ENCODE measurements at regions of chr3 and their contacts with region 1.

Region 1: GRCh38 chr3:188788621-188789081 is 383.1 kb upstream of the TPRG1 start:
- DNase-seq: peak; percentile 85
- H3K4me3 Mint-ChIP-seq: no peak overlapping the region
- H3K27ac Mint-ChIP-seq: no peak overlapping the region
- H3K4me1 Mint-ChIP-seq: peaks cover 2% of the 10 kb centered on the region
- H3K27me3 Mint-ChIP-seq: no peaks in the 10 kb centered on the region

Region 2: GRCh38 chr3:187974871-187975271 is 813.8 kb before region 1 on chr3:
- intact Hi-C with region 1: loop called (anchors 5 kb)
- DNase-seq: peak; percentile 73
- H3K4me3 Mint-ChIP-seq: peak overlapping the region; percentile 73
- H3K27ac Mint-ChIP-seq: peak overlapping the region; percentile 94
- H3K4me1 Mint-ChIP-seq: peaks cover 63% of the 10 kb centered on the region
- H3K27me3 Mint-ChIP-seq: no peaks in the 10 kb centered on the region

Region 3: DNA sequence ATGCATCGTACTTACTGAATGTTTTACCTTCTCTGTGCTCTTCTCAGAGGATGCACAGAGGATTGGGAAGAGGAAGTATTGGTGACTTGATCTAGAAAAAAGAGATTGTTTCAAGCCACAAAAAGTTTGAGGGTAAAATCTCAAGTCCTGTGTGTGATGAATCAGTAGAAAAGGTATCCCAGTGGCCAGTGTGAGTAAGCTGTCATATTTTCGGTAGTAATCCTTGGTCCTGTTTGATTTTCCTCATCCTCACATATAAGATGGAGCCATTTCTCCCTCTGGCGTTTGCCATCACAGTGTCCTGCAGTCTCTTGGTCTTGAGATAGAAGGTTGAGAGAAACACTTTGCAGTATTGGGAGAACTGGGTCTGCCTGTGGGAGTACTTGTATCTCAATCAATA is 467.9 kb before region 1 on chr3:
- intact Hi-C with region 1: loop called (anchors 5 kb)
- DNase-seq: no peak
- H3K4me3 Mint-ChIP-seq: no peak overlapping the region
- H3K27ac Mint-ChIP-seq: peak overlapping the region; percentile 29
- H3K4me1 Mint-ChIP-seq: peaks cover 48% of the 10 kb centered on the region
- H3K27me3 Mint-ChIP-seq: peaks cover 4% of the 10 kb centered on the region

Region 4: GRCh38 chr3:188683032-188683521 is 105.6 kb before region 1 on chr3:
- intact Hi-C with region 1: loop called (anchors 1 kb)
- DNase-seq: no peak
- H3K4me3 Mint-ChIP-seq: no peak overlapping the region
- H3K27ac Mint-ChIP-seq: peak overlapping the region; percentile 47
- H3K4me1 Mint-ChIP-seq: peaks cover 28% of the 10 kb centered on the region
- H3K27me3 Mint-ChIP-seq: no peaks in the 10 kb centered on the region

Region 5: DNA sequence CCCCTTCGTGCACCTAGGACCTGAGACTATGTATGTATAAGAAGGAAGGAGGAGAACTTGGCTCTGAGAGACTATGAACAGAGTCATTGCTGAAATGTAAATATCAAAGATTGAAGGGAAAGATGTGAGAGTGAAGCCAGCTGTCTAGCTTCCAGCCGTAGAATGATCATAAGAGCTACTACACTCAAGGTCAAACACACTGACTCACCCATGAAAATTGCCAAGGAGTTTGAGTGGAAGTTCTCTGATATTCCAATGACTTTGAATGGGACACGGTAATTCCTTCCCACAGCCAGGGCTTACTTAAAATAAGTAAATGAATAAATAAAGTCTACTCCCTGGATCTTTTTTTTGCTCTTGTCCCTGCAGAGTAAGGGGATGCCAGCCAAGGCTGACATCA is 15.8 kb before region 1 on chr3:
- intact Hi-C with region 1: no loop called
- DNase-seq: no peak
- H3K4me3 Mint-ChIP-seq: no peak overlapping the region
- H3K27ac Mint-ChIP-seq: no peak overlapping the region
- H3K4me1 Mint-ChIP-seq: no peaks in the 10 kb centered on the region
- H3K27me3 Mint-ChIP-seq: peaks cover under 1% of the 10 kb centered on the region

Region 6: DNA sequence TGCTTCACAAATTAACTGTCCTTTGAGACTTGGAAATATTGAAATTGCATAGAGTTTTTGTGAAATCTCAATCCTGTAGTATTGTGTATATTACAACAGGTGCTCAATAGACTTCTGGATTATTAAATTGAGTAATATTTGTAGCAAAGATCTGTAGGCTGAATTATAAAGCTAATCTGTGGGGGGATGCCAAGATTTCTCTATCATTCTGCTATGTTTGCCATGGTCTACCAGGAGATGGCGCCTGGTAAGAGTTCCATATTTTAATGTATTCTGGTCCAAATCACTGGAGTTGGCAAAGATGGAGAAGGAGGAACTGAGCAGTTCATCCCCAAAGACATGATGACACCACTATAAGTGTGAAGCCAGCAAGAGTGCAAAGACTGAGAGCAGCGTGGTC is 42.2 kb after region 1 on chr3:
- intact Hi-C with region 1: no loop called
- DNase-seq: no peak
- H3K4me3 Mint-ChIP-seq: no peak overlapping the region
- H3K27ac Mint-ChIP-seq: no peak overlapping the region
- H3K4me1 Mint-ChIP-seq: peaks cover 4% of the 10 kb centered on the region
- H3K27me3 Mint-ChIP-seq: no peaks in the 10 kb centered on the region

Region 7: DNA sequence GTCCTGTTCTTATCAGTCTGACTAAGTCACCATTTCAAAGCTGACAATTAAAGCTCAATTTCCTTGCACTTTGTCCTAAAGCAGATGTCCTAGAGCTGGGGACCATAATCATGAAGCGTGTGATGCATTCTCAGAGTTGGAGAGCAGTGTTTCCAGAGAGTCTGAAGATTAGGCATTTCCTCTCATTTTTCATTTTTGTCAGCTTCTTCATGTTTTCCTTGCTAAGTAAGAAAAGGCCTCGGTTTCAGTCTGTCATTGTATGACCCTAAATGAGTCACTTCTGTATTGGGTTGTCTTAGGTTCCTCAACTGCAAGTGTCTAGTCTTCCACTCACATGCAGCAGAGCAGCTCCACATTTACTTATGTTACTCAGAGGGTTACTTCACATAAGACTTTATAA is 125.9 kb after region 1 on chr3:
- intact Hi-C with region 1: loop called (anchors 1 kb)
- DNase-seq: no peak
- H3K4me3 Mint-ChIP-seq: peak overlapping the region; percentile 23
- H3K27ac Mint-ChIP-seq: peak overlapping the region; percentile 87
- H3K4me1 Mint-ChIP-seq: peaks cover 37% of the 10 kb centered on the region
- H3K27me3 Mint-ChIP-seq: no peaks in the 10 kb centered on the region